ENCODE measurements at regions of chrX and their contacts with region 1.

Region 1: GRCh38 chrX:68146054-68146453 is 287.2 kb downstream of the OPHN1 start:
- H3K4me3 ChIP-seq: no peak overlapping the region
- H3K27ac ChIP-seq: no peak overlapping the region
- H3K4me1 ChIP-seq: no peaks in the 10 kb centered on the region
- CTCF ChIP-seq: no peak; the same call in 1 of the 2 replicates

Region 2: DNA sequence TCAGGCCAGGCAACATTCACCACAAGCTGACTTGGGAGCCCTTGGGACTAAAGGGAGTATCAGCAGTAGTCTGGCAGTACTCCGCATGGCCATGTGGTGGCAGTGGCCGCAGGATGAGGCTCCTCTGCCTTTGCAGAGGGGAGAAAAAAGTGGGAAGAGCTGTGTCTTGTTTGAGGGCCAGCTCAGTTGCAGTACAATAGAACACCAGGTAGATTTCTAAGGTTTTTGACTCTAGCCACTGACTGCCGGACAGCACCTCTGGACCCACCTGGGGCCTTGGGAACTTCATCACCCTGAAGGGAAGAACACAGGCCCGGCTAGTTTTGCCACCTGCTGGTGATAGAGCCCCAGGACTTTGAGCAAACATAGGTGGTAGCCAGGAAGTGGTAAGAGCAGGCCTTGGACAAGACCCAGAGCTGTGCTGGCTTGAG is 127.4 kb before region 1 on chrX:
- CTCF ChIA-PET with region 1: interaction called, 15 read pairs
- POLR2A ChIA-PET with region 1: no interaction called
- H3K4me3 ChIP-seq: no peak overlapping the region
- H3K27ac ChIP-seq: no peak overlapping the region
- H3K4me1 ChIP-seq: no peaks in the 10 kb centered on the region
- CTCF ChIP-seq: 0 out of 2 replicates have a peak, but pooled peaks have one; percentile 45

Region 3: GRCh38 chrX:68354869-68355852 is 209.1 kb after region 1 on chrX:
- CTCF ChIA-PET with region 1: no interaction called
- POLR2A ChIA-PET with region 1: no interaction called
- H3K4me3 ChIP-seq: no peak overlapping the region
- H3K27ac ChIP-seq: 0 out of 2 replicates have a peak overlapping the region, but pooled peaks have one; percentile 8
- H3K4me1 ChIP-seq: 0 out of 2 replicates have a peak, but pooled peaks cover 2% of the 10 kb centered on the region
- CTCF ChIP-seq: no peak